ENCODE measurements at regions of chr7 and their contacts with region 1.

Region 1: GRCh38 chr7:45923290-45923689 is 2.2 kb upstream of the IGFBP3 start:
- DNase-seq: peak; percentile 58
- H3K4me3 ChIP-seq: no peak overlapping the region
- H3K27ac ChIP-seq: no peak overlapping the region
- H3K4me1 ChIP-seq: peaks cover 43% of the 10 kb centered on the region
- H3K27me3 ChIP-seq: peaks cover 6% of the 10 kb centered on the region
- CTCF ChIP-seq: peak; percentile 93 to 97

Region 2: GRCh38 chr7:45278763-45279398 is 644.4 kb before region 1 on chr7:
- CTCF ChIA-PET with region 1: no interaction called
- dilution Hi-C with region 1: no loop called
- in situ Hi-C with region 1: no loop called
- intact Hi-C with region 1: no loop called
- DNase-seq: no peak
- H3K4me3 ChIP-seq: no peak overlapping the region
- H3K27ac ChIP-seq: no peak overlapping the region
- H3K4me1 ChIP-seq: no peaks in the 10 kb centered on the region
- H3K27me3 ChIP-seq: peaks cover 8% of the 10 kb centered on the region
- CTCF ChIP-seq: no peak

Region 3: DNA sequence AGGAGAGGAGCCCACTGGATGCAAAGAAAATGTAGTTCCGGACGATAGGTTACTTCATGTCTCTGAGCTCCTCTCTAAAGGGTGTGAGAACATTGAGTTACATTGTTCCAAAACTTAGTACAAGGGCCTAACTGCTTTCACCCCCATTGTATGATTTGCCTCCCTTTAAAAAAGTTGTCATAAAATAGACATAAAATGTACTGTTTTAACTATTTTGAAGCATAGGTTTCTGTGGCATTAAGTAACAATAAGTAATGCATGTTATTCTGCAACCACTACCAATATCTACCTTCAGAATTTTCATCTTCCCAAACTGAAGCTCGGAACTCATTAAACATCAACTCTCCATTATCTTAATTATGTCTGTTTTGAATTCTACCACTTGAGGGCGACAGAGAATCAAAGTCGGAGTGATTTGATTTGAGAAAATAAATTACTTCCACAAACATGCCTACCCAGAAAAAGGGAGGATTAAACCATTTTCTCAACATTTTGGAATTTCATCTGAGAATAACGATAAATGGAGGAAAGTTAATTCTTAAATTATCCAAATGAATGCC is 32.3 kb before region 1 on chr7:
- CTCF ChIA-PET with region 1: no interaction called
- dilution Hi-C with region 1: no loop called
- in situ Hi-C with region 1: no loop called
- intact Hi-C with region 1: loop called (anchors 2 kb)
- DNase-seq: peak; percentile 18
- H3K4me3 ChIP-seq: no peak overlapping the region
- H3K27ac ChIP-seq: no peak overlapping the region
- H3K4me1 ChIP-seq: peaks cover 8% of the 10 kb centered on the region
- H3K27me3 ChIP-seq: peaks cover 4% of the 10 kb centered on the region
- CTCF ChIP-seq: peak; percentile 43 to 54

Region 4: DNA sequence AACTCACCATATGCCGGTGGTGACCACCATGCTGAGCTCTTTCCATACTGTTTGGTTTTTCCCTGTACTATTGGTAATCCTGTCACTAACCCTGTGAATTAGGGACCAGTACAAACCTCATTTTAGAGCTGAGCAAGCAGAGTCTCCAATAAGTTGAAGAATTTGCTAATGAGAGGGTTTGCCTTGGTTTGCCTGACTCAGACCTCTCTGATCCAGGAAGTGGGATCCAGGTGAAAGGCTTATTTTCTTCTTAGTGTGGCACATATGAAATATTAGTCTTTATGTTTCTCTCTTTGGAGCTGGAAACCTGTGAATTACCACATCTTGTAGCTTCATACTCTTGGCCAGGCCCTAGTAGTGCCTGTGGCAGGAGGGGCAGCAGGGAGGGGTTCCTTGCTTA is 111.9 kb after region 1 on chr7:
- CTCF ChIA-PET with region 1: no interaction called
- dilution Hi-C with region 1: no loop called
- in situ Hi-C with region 1: no loop called
- intact Hi-C with region 1: loop called (anchors 5 kb)
- DNase-seq: peak; percentile 24
- H3K4me3 ChIP-seq: no peak overlapping the region
- H3K27ac ChIP-seq: no peak overlapping the region
- H3K4me1 ChIP-seq: peaks cover 15% of the 10 kb centered on the region
- H3K27me3 ChIP-seq: no peaks in the 10 kb centered on the region
- CTCF ChIP-seq: no peak

Region 5: DNA sequence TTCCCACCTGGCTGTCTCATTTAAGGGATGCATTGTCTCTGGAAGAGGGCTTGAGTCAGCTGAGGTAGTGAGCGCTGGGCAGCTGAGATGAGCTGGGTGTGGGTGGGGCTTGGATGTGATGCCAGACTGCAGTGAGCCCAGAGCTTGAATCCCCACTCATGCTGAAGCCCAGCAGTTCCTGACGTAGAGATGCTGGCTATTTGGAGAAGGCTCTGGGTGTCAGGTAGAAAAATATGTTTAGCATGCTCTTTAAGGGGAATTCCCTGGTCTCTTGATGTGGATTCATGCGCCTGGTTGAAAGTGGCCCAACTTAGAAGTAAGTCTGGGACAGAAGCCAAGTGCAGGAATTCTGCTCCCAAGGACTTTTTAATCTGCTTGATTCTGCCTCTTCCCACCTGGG is 239.3 kb after region 1 on chr7:
- CTCF ChIA-PET with region 1: no interaction called
- dilution Hi-C with region 1: loop called (anchors 10 kb)
- in situ Hi-C with region 1: no loop called
- intact Hi-C with region 1: no loop called
- DNase-seq: peak; percentile 66
- H3K4me3 ChIP-seq: no peak overlapping the region
- H3K27ac ChIP-seq: peak overlapping the region; percentile 9
- H3K4me1 ChIP-seq: peaks cover 30% of the 10 kb centered on the region
- H3K27me3 ChIP-seq: no peaks in the 10 kb centered on the region
- CTCF ChIP-seq: no peak

Region 6: DNA sequence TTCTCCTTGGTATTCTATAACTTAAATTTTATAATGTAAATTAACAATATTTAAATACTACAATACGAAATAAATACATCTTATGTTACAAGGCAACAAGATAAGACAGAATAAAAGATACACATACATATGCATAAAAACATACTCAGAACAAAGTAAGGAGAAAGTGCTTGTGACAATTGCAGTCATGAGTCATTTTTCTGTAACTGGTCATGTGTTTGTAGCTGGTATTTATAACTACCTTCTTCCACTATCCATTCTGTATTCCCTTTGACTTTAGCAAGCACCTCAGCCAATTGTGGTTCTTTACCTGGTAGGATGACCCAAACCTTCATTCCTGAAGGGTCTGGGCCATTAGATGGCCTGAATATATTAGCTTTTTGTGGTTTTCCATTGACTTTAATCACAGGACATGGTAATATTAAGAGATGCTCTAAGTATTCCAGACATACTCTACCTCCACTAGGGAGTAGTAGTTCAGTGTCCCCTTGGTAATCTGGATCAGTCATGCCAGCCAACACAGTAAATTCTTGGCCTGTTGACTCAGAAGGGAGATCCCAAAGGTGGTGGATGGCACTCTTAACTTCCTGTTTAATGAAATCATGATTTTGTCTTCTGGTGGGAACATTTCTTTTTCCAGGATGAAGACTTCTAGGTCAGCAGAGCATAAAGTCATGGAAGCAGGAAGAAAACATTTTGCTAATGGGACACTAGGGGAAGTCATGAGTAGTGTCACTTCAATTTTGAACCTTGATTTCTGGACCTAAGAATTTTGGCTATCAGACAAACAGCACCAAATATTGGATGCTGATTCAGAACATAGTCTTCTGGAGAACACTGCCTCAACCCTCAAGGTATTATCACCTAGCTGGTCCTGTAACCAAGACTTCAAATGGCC is 731.5 kb after region 1 on chr7:
- CTCF ChIA-PET with region 1: no interaction called
- dilution Hi-C with region 1: no loop called
- in situ Hi-C with region 1: no loop called
- intact Hi-C with region 1: loop called (anchors 5 kb)
- DNase-seq: peak; percentile 86
- H3K4me3 ChIP-seq: no peak overlapping the region
- H3K27ac ChIP-seq: peak overlapping the region; percentile 73
- H3K4me1 ChIP-seq: peaks cover 35% of the 10 kb centered on the region
- H3K27me3 ChIP-seq: no peaks in the 10 kb centered on the region
- CTCF ChIP-seq: peak in 1 of 2 donors; percentile 0

Region 7: GRCh38 chr7:47179812-47180515 is 1256.7 kb after region 1 on chr7:
- CTCF ChIA-PET with region 1: no interaction called
- dilution Hi-C with region 1: no loop called
- in situ Hi-C with region 1: loop called (anchors 10 kb)
- intact Hi-C with region 1: loop called (anchors 2 kb)
- DNase-seq: peak; percentile 29
- H3K4me3 ChIP-seq: no peak overlapping the region
- H3K27ac ChIP-seq: no peak overlapping the region
- H3K4me1 ChIP-seq: no peaks in the 10 kb centered on the region
- H3K27me3 ChIP-seq: no peaks in the 10 kb centered on the region
- CTCF ChIP-seq: peak; percentile 85